Naive thymus-derived CD8-positive, alpha-beta T cell (primary cell): ENCODE measurements at regions of chr12 and their contacts with region 1.

Region 1: GRCh38 chr12:51047655-51048540 is at the start of gene LETMD1:
- DNase-seq: peak; percentile 83 to 97 (median 91)
- ATAC-seq: peak; percentile 95 to 96
- H3K4me3 Mint-ChIP-seq: peak within 1 kb of the TSS; percentile 91 to 99 (median 95)
- H3K27ac Mint-ChIP-seq: peak within 1 kb of the TSS; percentile 89 to 99 (median 97)
- H3K4me1 Mint-ChIP-seq: peaks cover 19 to 35% (median 33%) of the 10 kb centered on the region in 4 donors
- H3K27me3 Mint-ChIP-seq: no peaks in the 10 kb centered on the region
- polyA plus RNA-seq, gene LETMD1: 30.1 to 36.3 (median 30.9) TPM

Region 2: GRCh38 chr12:50986966-50987737 is 60.7 kb before region 1 on chr12:
- POLR2A ChIA-PET with region 1: no interaction called
- DNase-seq: peak in 9 of 10 donors; percentile 2 to 70 (median 34)
- ATAC-seq: peak; percentile 70 to 86
- H3K4me3 Mint-ChIP-seq: no peak overlapping the region
- H3K27ac Mint-ChIP-seq: peak overlapping the region in 8 of 10 donors; percentile 24 to 85 (median 60)
- H3K4me1 Mint-ChIP-seq: peaks cover 2 to 9% (median 6%) of the 10 kb centered on the region in 4 donors
- H3K27me3 Mint-ChIP-seq: no peaks in the 10 kb centered on the region

Region 3: DNA sequence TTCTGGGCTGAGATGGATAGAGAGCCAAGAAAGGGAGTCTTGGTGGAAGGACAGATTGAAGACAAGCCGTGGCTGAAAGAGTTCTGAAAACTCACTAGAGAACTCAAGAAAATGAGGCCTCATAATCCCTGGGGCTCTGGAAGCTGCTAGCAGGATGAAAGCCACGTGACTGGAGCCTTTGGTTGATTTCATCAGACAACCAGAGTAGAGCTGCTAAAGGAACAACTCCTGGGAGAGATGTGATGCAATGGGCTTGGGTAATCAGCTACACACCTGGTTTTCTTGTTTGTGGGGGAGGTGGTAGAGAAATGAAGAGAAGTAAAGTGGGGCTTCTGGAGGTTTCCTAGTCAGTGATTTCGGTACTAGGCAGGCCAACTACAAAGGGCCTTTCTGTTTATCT is 22.1 kb after region 1 on chr12:
- POLR2A ChIA-PET with region 1: no interaction called
- DNase-seq: no peak
- ATAC-seq: no peak
- H3K4me3 Mint-ChIP-seq: no peak overlapping the region
- H3K27ac Mint-ChIP-seq: peak overlapping the region in 1 of 10 donors; percentile 19
- H3K4me1 Mint-ChIP-seq: peaks cover 0 to 2% (median under 1%) of the 10 kb centered on the region in 4 donors
- H3K27me3 Mint-ChIP-seq: no peaks in the 10 kb centered on the region

Region 4: GRCh38 chr12:51083126-51083833 is 35.4 kb after region 1 on chr12 and contains the start of gene CSRNP2:
- POLR2A ChIA-PET with region 1: interaction called, 11 read pairs
- DNase-seq: peak; percentile 92 to 97 (median 94)
- ATAC-seq: peak; percentile 99
- H3K4me3 Mint-ChIP-seq: peak within 1 kb of the TSS; percentile 91 to 99 (median 96)
- H3K27ac Mint-ChIP-seq: peak within 1 kb of the TSS; percentile 89 to 98 (median 95)
- H3K4me1 Mint-ChIP-seq: peaks cover 18 to 41% (median 37%) of the 10 kb centered on the region in 4 donors
- H3K27me3 Mint-ChIP-seq: no peaks in the 10 kb centered on the region
- polyA plus RNA-seq, gene CSRNP2: 2.7 to 3.6 (median 2.7) TPM